ENCODE measurements at regions of chr1 and their contacts with region 1.

Region 1: GRCh38 chr1:200669314-200670241 is at the start of gene DDX59:
- DNase-seq: peak; percentile 98
- H3K4me3 ChIP-seq: peak within 1 kb of the TSS; percentile 69
- H3K27ac ChIP-seq: peak within 1 kb of the TSS; percentile 99
- H3K4me1 ChIP-seq: peaks cover 30% of the 10 kb centered on the region
- H3K27me3 ChIP-seq: no peaks in the 10 kb centered on the region
- CTCF ChIP-seq: no peak
- total RNA-seq, gene DDX59: 16.0 and 17.4 TPM in 2 replicates

Region 2: DNA sequence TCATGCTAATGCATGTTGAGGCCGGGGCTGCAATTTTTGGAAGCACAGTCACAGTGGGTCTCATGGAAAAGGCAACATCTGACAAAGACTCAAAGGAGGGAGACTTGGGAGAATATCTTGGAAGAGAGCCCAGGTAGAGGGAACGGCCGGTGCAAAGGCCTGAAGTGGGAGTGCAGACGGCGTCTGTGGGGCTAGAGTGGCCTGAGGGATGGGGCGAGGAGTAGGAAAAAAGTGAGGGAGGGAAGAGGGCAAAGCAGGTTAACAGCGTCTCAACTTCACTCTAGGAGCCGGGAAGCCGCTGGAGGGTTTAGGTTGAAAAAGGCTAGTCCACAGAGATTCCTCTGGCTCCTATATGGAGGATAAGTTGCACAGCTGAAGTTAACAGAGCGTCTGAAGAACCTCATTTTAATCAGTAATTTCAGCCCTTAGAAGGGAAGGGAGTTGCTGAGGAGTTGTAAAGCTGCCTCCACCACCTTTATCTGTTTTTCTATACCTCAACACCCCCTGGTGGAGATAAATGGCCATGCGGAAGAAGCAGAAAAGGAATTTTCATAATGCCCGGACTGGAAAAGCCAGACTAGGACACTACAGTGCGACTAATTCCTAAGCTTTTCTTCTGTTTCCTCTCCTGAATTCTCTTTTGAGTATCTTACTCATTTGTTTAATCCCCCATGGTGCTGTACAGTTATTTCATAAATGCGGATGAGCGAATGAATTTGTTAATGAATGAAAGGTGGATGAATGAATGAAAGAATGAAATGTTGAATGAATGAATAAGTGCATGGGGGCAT is 181.0 kb before region 1 on chr1:
- CTCF ChIA-PET with region 1: no interaction called
- POLR2A ChIA-PET with region 1: no interaction called
- intact Hi-C with region 1: no loop called
- DNase-seq: peak; percentile 82
- H3K4me3 ChIP-seq: no peak overlapping the region
- H3K27ac ChIP-seq: no peak overlapping the region
- H3K4me1 ChIP-seq: no peaks in the 10 kb centered on the region
- H3K27me3 ChIP-seq: no peaks in the 10 kb centered on the region
- CTCF ChIP-seq: peak; percentile 87

Region 3: DNA sequence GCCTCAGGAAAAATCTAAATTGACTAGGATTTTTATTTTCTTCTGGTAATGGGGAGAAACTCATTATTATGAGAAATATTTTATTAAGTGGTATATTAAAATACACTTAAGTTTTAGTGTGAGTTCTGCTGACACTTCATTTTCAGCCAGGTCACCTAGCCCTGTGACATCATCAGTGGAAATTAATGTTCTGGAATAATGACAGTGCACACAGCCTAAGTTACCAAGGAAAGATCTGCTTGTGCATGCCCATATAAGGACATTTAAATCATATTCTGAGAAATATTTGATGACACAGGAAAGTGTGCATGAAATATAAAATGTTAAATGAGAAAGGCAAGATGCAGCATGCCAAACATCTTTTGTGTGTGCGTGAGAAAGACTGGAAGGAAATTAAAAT is 151.1 kb before region 1 on chr1:
- CTCF ChIA-PET with region 1: no interaction called
- POLR2A ChIA-PET with region 1: no interaction called
- intact Hi-C with region 1: no loop called
- DNase-seq: no peak
- H3K4me3 ChIP-seq: no peak overlapping the region
- H3K27ac ChIP-seq: no peak overlapping the region
- H3K4me1 ChIP-seq: no peaks in the 10 kb centered on the region
- H3K27me3 ChIP-seq: no peaks in the 10 kb centered on the region
- CTCF ChIP-seq: no peak

Region 4: GRCh38 chr1:200639790-200640669 is 29.5 kb before region 1 on chr1:
- CTCF ChIA-PET with region 1: no interaction called
- POLR2A ChIA-PET with region 1: no interaction called
- intact Hi-C with region 1: no loop called
- DNase-seq: peak; percentile 88
- H3K4me3 ChIP-seq: no peak overlapping the region
- H3K27ac ChIP-seq: peak overlapping the region; percentile 68
- H3K4me1 ChIP-seq: peaks cover 13% of the 10 kb centered on the region
- H3K27me3 ChIP-seq: no peaks in the 10 kb centered on the region
- CTCF ChIP-seq: no peak

Region 5: GRCh38 chr1:200684015-200684414 is 14.4 kb after region 1 on chr1:
- CTCF ChIA-PET with region 1: interaction called, 3 read pairs
- POLR2A ChIA-PET with region 1: interaction called, 14 read pairs
- intact Hi-C with region 1: no loop called
- DNase-seq: no peak
- H3K4me3 ChIP-seq: no peak overlapping the region
- H3K27ac ChIP-seq: no peak overlapping the region
- H3K4me1 ChIP-seq: peaks cover 25% of the 10 kb centered on the region
- H3K27me3 ChIP-seq: no peaks in the 10 kb centered on the region
- CTCF ChIP-seq: no peak

Region 6: GRCh38 chr1:200819726-200820125 is 150.1 kb after region 1 on chr1:
- CTCF ChIA-PET with region 1: no interaction called
- POLR2A ChIA-PET with region 1: interaction called, 13 read pairs
- intact Hi-C with region 1: no loop called
- DNase-seq: no peak
- H3K4me3 ChIP-seq: no peak overlapping the region
- H3K27ac ChIP-seq: no peak overlapping the region
- H3K4me1 ChIP-seq: no peaks in the 10 kb centered on the region
- H3K27me3 ChIP-seq: no peaks in the 10 kb centered on the region
- CTCF ChIP-seq: no peak